ENCODE measurements at regions of chr9 and their contacts with region 1.

Region 1: DNA sequence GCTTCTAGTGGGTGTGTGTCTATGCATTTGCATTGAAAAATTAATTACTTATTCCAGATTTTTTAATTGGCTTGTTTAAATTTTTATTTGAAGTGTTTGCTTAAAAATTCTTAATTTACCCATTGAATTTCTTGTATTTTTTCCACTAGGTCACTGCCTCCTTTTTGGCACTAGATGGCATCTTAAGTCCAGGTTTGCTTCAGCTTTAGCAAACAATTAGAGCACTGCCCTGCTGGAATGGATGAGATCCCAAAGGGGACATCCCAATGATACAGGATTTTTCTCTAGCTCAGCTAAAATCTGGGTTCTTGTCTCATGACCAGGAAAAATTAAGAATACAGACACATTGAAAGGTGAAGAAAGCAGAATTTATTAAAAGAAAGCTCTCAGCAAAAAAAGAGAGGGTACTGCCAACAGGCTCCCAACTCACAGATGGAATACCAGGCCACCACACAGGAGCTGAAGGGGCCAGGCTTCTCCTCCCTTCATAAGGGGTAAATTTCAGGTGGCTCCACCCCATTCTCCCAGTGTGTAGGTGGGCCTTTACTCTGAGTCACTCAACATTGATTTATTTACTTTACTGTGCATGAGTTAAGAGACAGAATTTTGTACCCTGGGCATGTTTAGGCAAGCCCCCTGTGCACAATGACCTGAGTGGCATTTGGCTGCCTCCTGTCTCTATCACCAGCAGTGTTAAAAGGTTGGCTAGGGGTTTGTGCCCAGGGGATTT is 532.4 kb downstream of the ANXA1 start:
- DNase-seq: peak; percentile 3
- H3K4me3 Mint-ChIP-seq: no peak overlapping the region
- H3K27ac Mint-ChIP-seq: no peak overlapping the region
- H3K4me1 Mint-ChIP-seq: peaks cover 7% of the 10 kb centered on the region
- H3K27me3 Mint-ChIP-seq: no peaks in the 10 kb centered on the region
- CTCF ChIP-seq: peak; percentile 43

Region 2: DNA sequence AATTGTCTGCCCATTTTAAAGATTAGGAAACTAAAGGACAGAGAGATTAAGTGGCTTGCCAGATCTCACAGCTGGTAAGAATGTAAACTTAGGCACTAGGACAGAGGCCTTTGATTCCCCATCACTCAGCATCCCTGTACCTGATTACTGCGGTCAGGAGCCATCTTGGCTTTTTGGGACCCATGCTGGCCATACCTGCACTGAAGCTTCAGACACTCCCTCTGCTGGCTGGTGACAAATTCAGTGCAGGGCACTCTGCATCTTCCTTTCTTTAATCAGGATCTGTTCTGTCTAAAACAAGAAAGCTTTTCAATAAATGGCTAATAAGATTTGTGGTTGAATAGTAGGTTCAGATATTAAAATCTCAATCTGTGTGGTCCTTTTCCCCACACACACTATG is 597.6 kb after region 1 on chr9:
- CTCF ChIA-PET with region 1: no interaction called
- intact Hi-C with region 1: loop called (anchors 10 kb)
- DNase-seq: no peak
- H3K4me3 Mint-ChIP-seq: no peak overlapping the region
- H3K27ac Mint-ChIP-seq: no peak overlapping the region
- H3K4me1 Mint-ChIP-seq: no peaks in the 10 kb centered on the region
- H3K27me3 Mint-ChIP-seq: no peaks in the 10 kb centered on the region
- CTCF ChIP-seq: no peak

Region 3: GRCh38 chr9:74379718-74380117 is 695.7 kb after region 1 on chr9:
- CTCF ChIA-PET with region 1: interaction called, 8 read pairs
- intact Hi-C with region 1: loop called (anchors 1 kb)
- DNase-seq: peak; percentile 55
- H3K4me3 Mint-ChIP-seq: no peak overlapping the region
- H3K27ac Mint-ChIP-seq: no peak overlapping the region
- H3K4me1 Mint-ChIP-seq: no peaks in the 10 kb centered on the region
- H3K27me3 Mint-ChIP-seq: no peaks in the 10 kb centered on the region
- CTCF ChIP-seq: no peak

Region 4: GRCh38 chr9:74570879-74571512 is 887.0 kb after region 1 on chr9:
- CTCF ChIA-PET with region 1: no interaction called
- intact Hi-C with region 1: loop called (anchors 2 kb)
- DNase-seq: peak; percentile 8
- H3K4me3 Mint-ChIP-seq: no peak overlapping the region
- H3K27ac Mint-ChIP-seq: no peak overlapping the region
- H3K4me1 Mint-ChIP-seq: no peaks in the 10 kb centered on the region
- H3K27me3 Mint-ChIP-seq: no peaks in the 10 kb centered on the region
- CTCF ChIP-seq: no peak

Measured in Calu3 (cell line).